ENCODE measurements at regions of chr12 and their contacts with region 1.

Region 1: GRCh38 chr12:6285063-6285477 is 25.4 kb upstream of the PLEKHG6 start:
- DNase-seq: peak in 2 of 4 donors; percentile 67 to 85
- ATAC-seq: peak; percentile 87
- H3K4me3 ChIP-seq: no peak overlapping the region
- H3K27ac ChIP-seq: no peak overlapping the region
- H3K4me1 ChIP-seq: peaks cover 6 to 19% of the 10 kb centered on the region in 2 donors
- H3K27me3 ChIP-seq: no peaks in the 10 kb centered on the region
- CTCF ChIP-seq: peak; percentile 92 to 95

Region 2: DNA sequence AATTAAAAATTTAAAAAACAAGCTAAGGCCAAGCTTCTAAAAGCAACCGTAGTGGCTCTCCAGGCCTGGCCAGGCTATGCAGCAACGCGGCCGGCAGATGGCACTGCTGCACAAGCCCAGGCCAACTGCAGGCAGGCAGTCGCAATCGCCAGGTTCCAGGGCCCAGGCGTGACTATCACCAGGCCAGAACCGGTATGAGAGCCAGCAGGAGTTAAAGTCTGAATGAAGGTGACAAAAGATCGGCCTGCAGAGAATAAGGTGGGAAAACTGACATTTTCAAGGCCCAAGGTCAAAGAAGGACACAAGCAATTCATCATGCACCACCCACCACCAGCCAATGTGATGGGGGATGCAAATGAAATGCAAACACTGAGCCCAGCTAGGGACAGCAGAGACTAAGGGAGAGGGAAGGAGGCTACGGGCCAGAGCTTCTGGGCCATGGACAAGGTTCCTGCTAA is 296.4 kb before region 1 on chr12:
- intact Hi-C with region 1: loop called in 1 of 2 experiments (anchors 10 kb)
- DNase-seq: peak; percentile 64 to 96 (median 78)
- ATAC-seq: peak; percentile 99
- H3K4me3 ChIP-seq: no peak overlapping the region
- H3K27ac ChIP-seq: no peak overlapping the region
- H3K4me1 ChIP-seq: no peaks in the 10 kb centered on the region
- H3K27me3 ChIP-seq: no peaks in the 10 kb centered on the region
- CTCF ChIP-seq: peak; percentile 93 to 94

Region 3: DNA sequence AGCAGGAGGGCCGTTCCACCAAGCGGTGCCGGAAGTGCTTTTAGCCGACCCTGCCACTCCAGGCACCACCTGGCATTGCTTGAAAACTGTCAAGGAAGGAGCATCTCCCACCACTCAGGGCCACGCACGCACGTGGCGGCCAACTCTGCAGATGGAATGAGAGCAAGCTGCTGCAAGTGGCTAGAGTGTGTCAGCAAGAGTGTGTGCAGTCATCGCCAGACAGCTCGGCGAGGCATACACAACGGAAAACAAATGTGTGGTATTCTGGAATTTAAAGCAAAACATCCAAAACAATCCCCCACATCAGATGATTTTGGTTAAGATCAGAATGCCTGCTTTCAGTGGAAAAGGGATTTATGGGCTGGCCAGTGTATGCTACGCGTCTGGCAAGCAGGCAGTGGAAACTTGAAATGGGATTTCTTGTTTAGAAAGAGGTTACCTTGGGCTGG is 73.6 kb before region 1 on chr12:
- intact Hi-C with region 1: no loop called
- DNase-seq: peak in 1 of 4 donors; percentile 74
- ATAC-seq: no peak
- H3K4me3 ChIP-seq: no peak overlapping the region
- H3K27ac ChIP-seq: peak overlapping the region in 1 of 2 donors; percentile 17
- H3K4me1 ChIP-seq: peaks cover 21 to 71% of the 10 kb centered on the region in 2 donors
- H3K27me3 ChIP-seq: no peaks in the 10 kb centered on the region
- CTCF ChIP-seq: no peak